ENCODE measurements at regions of chr3 and their contacts with region 1.

Region 1: GRCh38 chr3:42780892-42781700 is 8.0 kb upstream of the CCDC13 start:
- DNase-seq: peak; percentile 43
- H3K4me3 ChIP-seq: no peak overlapping the region
- H3K27ac ChIP-seq: no peak overlapping the region
- H3K4me1 ChIP-seq: peaks cover 11% of the 10 kb centered on the region
- H3K27me3 ChIP-seq: no peaks in the 10 kb centered on the region
- CTCF ChIP-seq: peak; percentile 63 to 65

Region 2: GRCh38 chr3:42839616-42840015 is 58.5 kb after region 1 on chr3:
- CTCF ChIA-PET with region 1: no interaction called
- dilution Hi-C with region 1: no loop called
- in situ Hi-C with region 1: loop called in 1 of 2 experiments (anchors 5 kb)
- intact Hi-C with region 1: loop called (anchors 1 kb)
- DNase-seq: peak; percentile 60
- H3K4me3 ChIP-seq: no peak overlapping the region
- H3K27ac ChIP-seq: no peak overlapping the region
- H3K4me1 ChIP-seq: no peaks in the 10 kb centered on the region
- H3K27me3 ChIP-seq: no peaks in the 10 kb centered on the region
- CTCF ChIP-seq: peak; percentile 77 to 86

Region 3: GRCh38 chr3:42926310-42926709 is 145.2 kb after region 1 on chr3:
- CTCF ChIA-PET with region 1: no interaction called
- dilution Hi-C with region 1: no loop called
- in situ Hi-C with region 1: no loop called
- intact Hi-C with region 1: no loop called
- DNase-seq: no peak
- H3K4me3 ChIP-seq: no peak overlapping the region
- H3K27ac ChIP-seq: no peak overlapping the region
- H3K4me1 ChIP-seq: no peaks in the 10 kb centered on the region
- H3K27me3 ChIP-seq: peaks cover 3% of the 10 kb centered on the region
- CTCF ChIP-seq: no peak

Measured in mammary epithelial cell (primary cell).